ENCODE measurements at regions of chr11 and their contacts with region 1.

Region 1: DNA sequence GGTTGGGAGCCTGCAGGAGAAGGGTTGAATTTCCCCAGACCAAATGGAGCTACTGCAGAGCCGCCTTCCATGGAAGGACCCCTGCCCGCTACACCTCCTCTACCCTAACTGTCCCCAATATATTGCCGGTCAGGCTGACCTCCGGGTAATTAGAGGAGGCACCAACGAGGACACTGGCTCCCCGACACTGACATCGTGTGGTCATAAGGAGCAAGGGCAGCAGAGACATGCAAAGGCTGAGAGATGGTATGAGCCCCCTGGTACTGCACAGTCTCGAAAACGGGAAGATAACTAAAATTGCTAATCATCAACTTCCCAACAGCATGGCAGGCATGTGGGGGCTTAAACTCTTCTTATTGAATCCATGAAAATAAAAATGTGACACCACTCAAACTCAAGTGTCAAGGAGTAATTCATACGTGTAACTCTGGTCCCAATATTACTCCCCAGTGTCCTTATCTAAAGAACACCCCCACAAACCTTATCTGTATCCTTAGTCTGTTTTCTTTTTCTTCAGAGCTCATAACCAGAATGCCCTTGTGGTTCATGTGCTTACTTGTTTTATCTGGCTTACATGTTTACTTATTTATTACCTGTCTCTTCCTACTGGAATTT is 4.4 kb downstream of the CAVIN3 start:
- DNase-seq: peak; percentile 51
- H3K4me3 ChIP-seq: no peak overlapping the region
- H3K27ac ChIP-seq: no peak overlapping the region
- H3K4me1 ChIP-seq: peaks cover 18% of the 10 kb centered on the region
- H3K27me3 ChIP-seq: no peaks in the 10 kb centered on the region
- CTCF ChIP-seq: peak; percentile 86 to 88
- POLR2A ChIP-seq: no peak

Region 2: DNA sequence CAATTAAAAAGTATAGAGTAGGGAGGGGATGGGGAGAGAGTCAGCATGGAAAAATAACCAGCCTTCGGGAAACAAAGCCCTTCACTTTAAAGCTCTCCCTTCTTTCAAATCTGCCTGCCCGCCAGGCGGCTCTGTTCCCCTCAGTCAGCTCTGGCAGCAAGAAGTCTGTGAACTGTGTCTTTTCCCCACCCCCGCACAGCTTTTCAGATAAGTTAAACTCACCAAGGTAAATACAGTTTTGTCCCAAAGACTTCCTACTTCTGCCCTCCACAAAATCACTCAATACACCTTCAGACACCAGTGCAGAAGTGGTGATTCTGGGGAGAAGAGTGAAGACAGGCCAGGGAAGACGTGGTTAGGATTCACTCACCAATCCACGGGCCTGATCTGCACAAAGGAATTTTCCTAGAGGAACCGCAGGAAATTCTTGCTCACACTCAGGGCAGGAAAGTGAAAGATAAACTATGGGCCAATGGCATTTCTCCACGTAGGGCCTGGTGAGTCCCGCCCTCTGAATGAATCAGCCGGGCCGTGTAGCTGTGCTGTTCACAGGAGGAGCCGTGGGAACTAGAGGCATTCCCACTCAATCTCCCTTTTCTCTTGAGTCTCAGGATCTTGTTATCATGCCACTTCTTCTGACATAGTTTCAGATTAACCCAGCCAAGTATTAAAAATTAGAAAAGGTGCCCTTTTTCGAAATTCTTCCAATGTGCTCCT is 631.1 kb before region 1 on chr11 and contains the start of gene TRIM5:
- CTCF ChIA-PET with region 1: no interaction called
- POLR2A ChIA-PET with region 1: no interaction called
- dilution Hi-C with region 1: no loop called
- intact Hi-C with region 1: loop called (anchors 5 kb)
- DNase-seq: peak; percentile 99
- H3K4me3 ChIP-seq: peak within 1 kb of the TSS; percentile 38 to 94 (median 62)
- H3K27ac ChIP-seq: peak within 1 kb of the TSS; percentile 98
- H3K4me1 ChIP-seq: peaks cover 17% of the 10 kb centered on the region
- H3K27me3 ChIP-seq: no peaks in the 10 kb centered on the region
- CTCF ChIP-seq: peak; percentile 57 to 67
- POLR2A ChIP-seq: peak; percentile 97
- total RNA-seq, gene TRIM5: 54.5 and 61.4 TPM in 2 replicates

Region 3: GRCh38 chr11:6234387-6235107 is 81.4 kb before region 1 on chr11 and contains the start of gene FHIP1B:
- CTCF ChIA-PET with region 1: interaction called, 4 read pairs
- POLR2A ChIA-PET with region 1: no interaction called
- dilution Hi-C with region 1: no loop called
- intact Hi-C with region 1: loop called (anchors 1 kb)
- DNase-seq: peak; percentile 100
- H3K4me3 ChIP-seq: peak within 1 kb of the TSS; percentile 69 to 90 (median 78)
- H3K27ac ChIP-seq: peak within 1 kb of the TSS; percentile 10
- H3K4me1 ChIP-seq: peaks cover 6% of the 10 kb centered on the region
- H3K27me3 ChIP-seq: peaks cover 3 to 6% of the 10 kb centered on the region in 2 experiments
- CTCF ChIP-seq: no peak
- POLR2A ChIP-seq: no peak
- total RNA-seq, gene FHIP1B: 21.3 and 23.0 TPM in 2 replicates

Region 4: GRCh38 chr11:6285019-6285418 is 30.9 kb before region 1 on chr11:
- CTCF ChIA-PET with region 1: interaction called, 3 read pairs
- POLR2A ChIA-PET with region 1: no interaction called
- dilution Hi-C with region 1: no loop called
- intact Hi-C with region 1: loop called (anchors 1 kb)
- DNase-seq: no peak
- H3K4me3 ChIP-seq: no peak overlapping the region
- H3K27ac ChIP-seq: no peak overlapping the region
- H3K4me1 ChIP-seq: no peaks in the 10 kb centered on the region
- H3K27me3 ChIP-seq: peaks cover 22 to 34% of the 10 kb centered on the region in 2 experiments
- CTCF ChIP-seq: no peak
- POLR2A ChIP-seq: no peak

Region 5: GRCh38 chr11:6326985-6327384 is 11.1 kb after region 1 on chr11:
- CTCF ChIA-PET with region 1: interaction called, 5 read pairs
- POLR2A ChIA-PET with region 1: no interaction called
- dilution Hi-C with region 1: no loop called
- intact Hi-C with region 1: loop called (anchors 1 kb)
- DNase-seq: peak; percentile 61
- H3K4me3 ChIP-seq: no peak overlapping the region
- H3K27ac ChIP-seq: peak overlapping the region; percentile 73
- H3K4me1 ChIP-seq: peaks cover 30% of the 10 kb centered on the region
- H3K27me3 ChIP-seq: no peaks in the 10 kb centered on the region
- CTCF ChIP-seq: no peak
- POLR2A ChIP-seq: peak; percentile 52

Region 6: GRCh38 chr11:6389921-6390724 is 74.2 kb after region 1 on chr11 and contains the start of gene SMPD1:
- CTCF ChIA-PET with region 1: no interaction called
- POLR2A ChIA-PET with region 1: no interaction called
- dilution Hi-C with region 1: no loop called
- intact Hi-C with region 1: loop called (anchors 1 kb)
- DNase-seq: peak; percentile 90
- H3K4me3 ChIP-seq: peak within 1 kb of the TSS; percentile 71 to 82 (median 72)
- H3K27ac ChIP-seq: peak within 1 kb of the TSS; percentile 73
- H3K4me1 ChIP-seq: peaks cover 33% of the 10 kb centered on the region
- H3K27me3 ChIP-seq: no peaks in the 10 kb centered on the region
- CTCF ChIP-seq: no peak
- POLR2A ChIP-seq: peak; percentile 86
- total RNA-seq, gene SMPD1: 51.9 and 58.9 TPM in 2 replicates

Region 7: GRCh38 chr11:6452219-6452618 is 136.3 kb after region 1 on chr11:
- CTCF ChIA-PET with region 1: no interaction called
- POLR2A ChIA-PET with region 1: no interaction called
- dilution Hi-C with region 1: no loop called
- intact Hi-C with region 1: no loop called
- DNase-seq: no peak
- H3K4me3 ChIP-seq: no peak overlapping the region
- H3K27ac ChIP-seq: no peak overlapping the region
- H3K4me1 ChIP-seq: no peaks in the 10 kb centered on the region
- H3K27me3 ChIP-seq: no peaks in the 10 kb centered on the region
- CTCF ChIP-seq: no peak
- POLR2A ChIP-seq: no peak

Region 8: GRCh38 chr11:6695377-6695776 is 379.5 kb after region 1 on chr11:
- CTCF ChIA-PET with region 1: no interaction called
- POLR2A ChIA-PET with region 1: no interaction called
- dilution Hi-C with region 1: no loop called
- intact Hi-C with region 1: loop called (anchors 5 kb)
- DNase-seq: peak; percentile 95
- H3K4me3 ChIP-seq: peak overlapping the region in 1 of 3 experiments; percentile 6
- H3K27ac ChIP-seq: peak overlapping the region; percentile 88
- H3K4me1 ChIP-seq: peaks cover 31% of the 10 kb centered on the region
- H3K27me3 ChIP-seq: no peaks in the 10 kb centered on the region
- CTCF ChIP-seq: no peak
- POLR2A ChIP-seq: no peak

Region 9: DNA sequence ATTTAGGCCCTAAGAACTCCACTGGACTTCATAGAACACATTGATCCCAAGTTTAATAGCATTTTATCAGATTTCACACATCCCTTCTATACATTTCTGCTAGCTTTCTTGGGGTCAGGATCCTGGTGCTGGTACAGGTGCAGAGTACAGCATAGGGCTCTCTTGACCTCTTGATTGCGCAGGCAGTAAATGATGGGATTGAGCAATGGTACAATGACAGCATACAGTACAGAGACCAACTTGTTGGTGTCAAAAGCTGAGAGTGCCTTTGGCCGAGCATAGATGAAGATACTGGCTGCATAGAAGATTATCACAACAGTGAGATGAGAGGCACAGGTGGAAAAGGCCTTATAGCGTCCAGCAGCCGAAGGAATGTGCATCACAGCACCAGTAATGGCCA is 478.7 kb after region 1 on chr11:
- CTCF ChIA-PET with region 1: no interaction called
- POLR2A ChIA-PET with region 1: no interaction called
- dilution Hi-C with region 1: no loop called
- intact Hi-C with region 1: no loop called
- DNase-seq: no peak
- H3K4me3 ChIP-seq: no peak overlapping the region
- H3K27ac ChIP-seq: no peak overlapping the region
- H3K4me1 ChIP-seq: no peaks in the 10 kb centered on the region
- H3K27me3 ChIP-seq: peaks cover 0 to 5% of the 10 kb centered on the region in 2 experiments
- CTCF ChIP-seq: no peak
- POLR2A ChIP-seq: no peak

Measured in endothelial cell of umbilical vein (primary cell).